PC-9 (cell line): ENCODE measurements at regions of chr18 and their contacts with region 1.

Region 1: DNA sequence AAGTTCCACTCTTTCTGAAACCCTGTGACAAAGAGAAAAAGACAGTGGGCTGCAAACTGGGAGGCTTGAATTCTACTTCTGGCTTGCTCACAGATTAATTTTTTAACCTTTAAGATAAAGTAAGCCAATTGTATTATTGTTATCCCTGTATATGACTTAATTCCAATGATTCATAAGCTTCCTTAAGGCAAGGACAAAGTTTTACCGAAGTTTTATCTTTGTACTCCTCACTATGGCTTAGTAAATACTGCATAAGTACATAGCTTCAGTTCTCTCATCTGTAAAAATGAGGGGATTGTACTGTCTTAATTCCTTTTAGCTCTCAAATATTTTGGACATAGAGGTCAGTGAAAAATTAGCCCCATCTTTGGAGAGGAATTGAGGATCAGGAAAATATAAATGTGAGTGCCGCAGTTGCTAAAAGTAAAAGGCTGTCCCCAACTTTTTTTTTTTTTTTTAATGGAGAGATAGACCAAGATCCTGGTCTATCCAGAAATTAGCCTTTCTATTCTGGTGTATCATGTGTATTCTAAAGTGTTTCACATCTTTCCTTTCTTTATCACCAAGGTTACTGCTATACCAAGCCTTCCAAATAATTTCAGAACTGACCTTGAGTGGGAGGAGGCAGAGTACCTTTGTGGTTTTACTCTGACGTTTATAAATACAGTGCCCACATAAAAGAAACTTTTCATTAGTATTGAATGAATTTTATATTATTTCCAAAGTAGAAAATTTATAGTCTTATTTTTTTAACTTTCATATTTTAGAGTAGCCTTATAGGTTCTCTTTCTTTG is 13.3 kb downstream of the RELCH start:
- DNase-seq: no peak
- H3K4me3 ChIP-seq: no peak overlapping the region
- H3K27ac ChIP-seq: peak overlapping the region; percentile 49
- H3K4me1 ChIP-seq: peaks cover 43% of the 10 kb centered on the region
- H3K27me3 ChIP-seq: no peaks in the 10 kb centered on the region
- CTCF ChIP-seq: no peak

Region 2: GRCh38 chr18:61825386-61825785 is 374.9 kb before region 1 on chr18:
- CTCF ChIA-PET with region 1: no interaction called
- POLR2A ChIA-PET with region 1: no interaction called
- intact Hi-C with region 1: no loop called
- DNase-seq: no peak
- H3K4me3 ChIP-seq: no peak overlapping the region
- H3K27ac ChIP-seq: no peak overlapping the region
- H3K4me1 ChIP-seq: no peaks in the 10 kb centered on the region
- H3K27me3 ChIP-seq: no peaks in the 10 kb centered on the region
- CTCF ChIP-seq: no peak

Region 3: DNA sequence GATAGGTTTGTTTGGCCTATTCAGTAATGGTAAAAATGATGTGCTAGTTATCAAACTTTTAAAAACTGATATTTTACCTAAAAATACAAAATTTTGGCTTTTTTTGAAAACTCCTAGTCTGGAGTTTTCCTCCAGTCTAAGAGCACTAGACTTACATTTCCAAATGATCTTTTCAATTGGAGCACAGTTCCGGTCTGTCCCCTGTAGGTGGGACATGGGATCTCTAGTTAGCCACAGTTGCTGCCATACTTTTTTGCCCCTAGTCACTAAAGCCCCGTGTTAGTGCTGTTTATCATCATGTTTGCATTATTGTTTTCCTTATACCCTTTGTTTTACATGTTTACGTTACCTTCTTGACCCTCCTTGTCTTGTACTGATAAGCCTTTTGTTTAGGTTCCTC is 39.2 kb after region 1 on chr18:
- CTCF ChIA-PET with region 1: no interaction called
- POLR2A ChIA-PET with region 1: no interaction called
- intact Hi-C with region 1: loop called (anchors 5 kb)
- DNase-seq: no peak
- H3K4me3 ChIP-seq: no peak overlapping the region
- H3K27ac ChIP-seq: no peak overlapping the region
- H3K4me1 ChIP-seq: no peaks in the 10 kb centered on the region
- H3K27me3 ChIP-seq: no peaks in the 10 kb centered on the region
- CTCF ChIP-seq: no peak

Region 4: GRCh38 chr18:62442391-62442790 is 242.1 kb after region 1 on chr18:
- CTCF ChIA-PET with region 1: no interaction called
- POLR2A ChIA-PET with region 1: no interaction called
- intact Hi-C with region 1: no loop called
- DNase-seq: no peak
- H3K4me3 ChIP-seq: no peak overlapping the region
- H3K27ac ChIP-seq: no peak overlapping the region
- H3K4me1 ChIP-seq: peaks cover 28% of the 10 kb centered on the region
- H3K27me3 ChIP-seq: no peaks in the 10 kb centered on the region
- CTCF ChIP-seq: no peak